PC-9 (cell line): ENCODE measurements at regions of chr9 and their contacts with region 1.

Region 1: DNA sequence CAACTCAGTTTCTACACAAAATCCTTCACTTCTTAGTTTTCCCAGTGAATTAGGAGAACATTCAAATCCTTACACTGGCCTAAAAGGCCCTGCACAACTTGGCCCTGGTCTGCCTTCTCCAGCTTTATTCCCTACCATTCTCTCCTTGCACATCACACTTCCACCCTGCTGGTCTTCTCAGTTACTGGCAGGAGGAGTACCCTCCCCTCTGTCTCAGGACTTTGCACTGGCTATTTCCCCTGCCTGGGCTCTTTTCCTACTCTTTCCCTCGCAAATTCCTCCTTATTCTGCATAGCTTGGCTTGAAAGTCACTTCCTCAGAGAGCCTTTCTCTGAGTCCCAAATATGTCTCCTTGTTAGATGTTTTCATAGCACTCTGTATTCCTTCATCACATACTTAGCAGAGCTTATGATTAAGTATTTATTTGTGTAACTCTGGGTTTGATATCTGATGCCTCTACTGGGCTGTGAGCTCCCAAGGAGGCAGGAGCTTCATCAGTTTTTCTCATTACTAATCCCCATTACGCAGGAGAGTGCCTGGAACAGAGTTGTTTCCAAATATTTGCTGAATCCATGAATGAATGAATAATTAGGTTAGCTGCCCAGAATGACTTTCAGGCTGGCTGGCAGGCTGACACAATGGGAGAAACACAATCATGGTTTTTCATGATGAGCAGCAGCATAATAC is 159.8 kb upstream of the KLF9 start:
- DNase-seq: no peak
- H3K4me3 ChIP-seq: no peak overlapping the region
- H3K27ac ChIP-seq: no peak overlapping the region
- H3K4me1 ChIP-seq: peaks cover 10% of the 10 kb centered on the region
- H3K27me3 ChIP-seq: no peaks in the 10 kb centered on the region
- CTCF ChIP-seq: no peak

Region 2: DNA sequence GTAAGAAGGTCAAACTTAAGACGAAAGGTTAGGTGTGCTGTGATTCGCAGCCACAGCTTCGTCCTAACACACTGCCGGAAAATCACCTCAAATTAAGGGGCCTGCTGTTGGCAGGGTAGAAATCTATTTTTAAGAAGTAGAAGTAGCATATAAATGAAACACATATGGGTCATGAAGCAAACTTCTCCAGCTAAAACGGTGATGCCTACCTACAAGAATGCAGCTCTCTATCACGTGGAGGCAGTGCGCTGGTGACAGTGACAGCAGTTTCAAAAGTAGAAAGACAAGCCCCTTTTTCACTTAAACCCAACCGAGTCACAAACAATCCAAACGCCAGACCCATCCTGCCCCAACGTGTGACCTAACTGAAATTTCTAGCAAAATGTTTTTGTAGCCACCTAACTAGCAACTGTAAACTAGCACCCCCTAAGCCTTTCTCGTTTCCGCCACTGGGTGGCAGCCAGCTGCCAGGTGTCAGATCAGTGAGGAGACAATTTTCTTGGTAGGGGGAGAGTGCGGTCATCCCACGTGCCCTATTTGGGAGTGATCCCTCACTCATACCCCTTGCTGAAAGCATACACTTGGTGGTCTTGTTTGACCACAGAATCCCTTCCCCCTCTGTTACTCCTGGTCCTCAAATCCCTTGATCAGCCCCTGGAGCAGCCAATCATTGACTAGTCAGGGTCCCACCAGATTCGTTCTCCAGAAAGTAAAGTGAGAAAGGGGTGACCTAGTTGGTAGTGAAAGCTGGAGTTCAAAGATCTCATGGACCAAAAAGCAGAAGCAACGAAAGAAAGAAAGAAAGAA is 602.4 kb before region 1 on chr9:
- CTCF ChIA-PET with region 1: no interaction called
- POLR2A ChIA-PET with region 1: no interaction called
- intact Hi-C with region 1: no loop called
- DNase-seq: peak in 1 of 2 experiments; percentile 73
- H3K4me3 ChIP-seq: no peak overlapping the region
- H3K27ac ChIP-seq: no peak overlapping the region
- H3K4me1 ChIP-seq: no peaks in the 10 kb centered on the region
- H3K27me3 ChIP-seq: no peaks in the 10 kb centered on the region
- CTCF ChIP-seq: peak; percentile 91

Region 3: DNA sequence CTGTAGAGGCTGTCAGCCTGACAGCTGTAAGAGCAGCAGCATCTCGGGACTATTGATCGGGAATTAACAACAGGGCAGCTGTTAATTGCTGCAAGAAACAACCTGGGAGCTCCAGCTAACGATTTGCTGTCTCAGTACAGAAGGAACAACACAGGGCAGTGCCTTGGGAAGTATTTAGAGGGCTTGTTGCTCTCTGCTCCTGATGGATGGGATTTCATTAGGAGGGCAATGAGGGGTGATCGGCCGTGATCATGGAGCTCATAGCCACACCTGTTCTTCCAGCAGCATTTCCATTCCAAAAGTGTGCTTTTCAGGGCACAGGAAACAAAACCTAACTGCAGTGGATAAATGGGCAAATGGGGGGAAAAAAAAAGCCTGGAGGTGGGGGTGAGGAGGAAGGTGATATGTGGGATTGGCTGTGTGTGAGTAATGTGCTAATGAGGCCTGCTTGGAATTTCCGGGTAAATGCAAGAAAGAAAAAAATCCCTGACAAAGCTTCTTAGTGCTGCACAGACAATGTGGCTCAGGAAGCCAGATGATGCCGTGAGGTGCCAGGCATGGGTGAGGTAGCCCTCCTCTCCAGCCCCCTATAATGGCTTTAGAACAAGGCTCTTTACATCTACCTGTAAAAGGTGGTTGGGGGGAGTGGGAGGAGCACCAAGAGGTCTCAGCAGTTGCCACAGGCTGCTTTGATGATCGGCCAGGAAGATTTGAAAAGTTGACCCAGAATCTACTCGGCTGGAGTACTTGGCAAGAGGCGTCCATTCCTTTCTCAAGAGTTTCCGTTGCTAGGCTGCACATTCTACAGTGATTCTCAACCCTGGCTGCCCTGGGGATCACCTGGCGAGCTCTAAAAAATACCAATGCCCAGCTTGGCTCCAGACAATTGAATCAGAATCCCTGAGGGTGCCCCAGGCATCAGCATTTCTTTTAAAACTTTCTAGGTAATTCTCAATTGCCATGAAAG is 20.3 kb before region 1 on chr9:
- CTCF ChIA-PET with region 1: no interaction called
- POLR2A ChIA-PET with region 1: no interaction called
- intact Hi-C with region 1: loop called (anchors 1 kb)
- DNase-seq: peak in 1 of 2 experiments; percentile 65
- H3K4me3 ChIP-seq: no peak overlapping the region
- H3K27ac ChIP-seq: no peak overlapping the region
- H3K4me1 ChIP-seq: peaks cover 9% of the 10 kb centered on the region; the same call in 1 of the 2 replicates
- H3K27me3 ChIP-seq: no peaks in the 10 kb centered on the region
- CTCF ChIP-seq: no peak

Region 4: DNA sequence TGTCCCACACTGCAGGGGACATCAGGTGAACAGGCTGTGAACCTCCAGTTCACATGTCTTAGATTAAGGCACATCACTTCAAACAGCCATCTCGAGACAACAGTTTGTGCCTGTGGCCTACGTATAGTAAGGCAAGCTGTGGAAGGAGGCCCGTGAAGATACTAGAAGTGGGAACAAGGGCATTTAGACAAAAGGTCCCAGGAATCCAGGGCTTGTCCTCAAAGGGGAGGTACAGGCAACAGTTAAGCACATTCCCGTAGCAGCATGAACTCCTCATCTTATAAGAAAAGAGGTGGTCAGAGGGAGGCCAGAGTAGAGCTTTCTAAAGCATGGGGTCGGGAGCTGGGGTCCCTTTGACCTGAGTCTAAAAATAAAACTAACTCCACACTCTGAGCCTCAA is 669.7 kb after region 1 on chr9:
- CTCF ChIA-PET with region 1: no interaction called
- POLR2A ChIA-PET with region 1: no interaction called
- intact Hi-C with region 1: no loop called
- DNase-seq: no peak
- H3K4me3 ChIP-seq: no peak overlapping the region
- H3K27ac ChIP-seq: no peak overlapping the region
- H3K4me1 ChIP-seq: no peaks in the 10 kb centered on the region
- H3K27me3 ChIP-seq: no peaks in the 10 kb centered on the region
- CTCF ChIP-seq: no peak